ENCODE measurements at regions of chr5 and their contacts with region 1.

Region 1: DNA sequence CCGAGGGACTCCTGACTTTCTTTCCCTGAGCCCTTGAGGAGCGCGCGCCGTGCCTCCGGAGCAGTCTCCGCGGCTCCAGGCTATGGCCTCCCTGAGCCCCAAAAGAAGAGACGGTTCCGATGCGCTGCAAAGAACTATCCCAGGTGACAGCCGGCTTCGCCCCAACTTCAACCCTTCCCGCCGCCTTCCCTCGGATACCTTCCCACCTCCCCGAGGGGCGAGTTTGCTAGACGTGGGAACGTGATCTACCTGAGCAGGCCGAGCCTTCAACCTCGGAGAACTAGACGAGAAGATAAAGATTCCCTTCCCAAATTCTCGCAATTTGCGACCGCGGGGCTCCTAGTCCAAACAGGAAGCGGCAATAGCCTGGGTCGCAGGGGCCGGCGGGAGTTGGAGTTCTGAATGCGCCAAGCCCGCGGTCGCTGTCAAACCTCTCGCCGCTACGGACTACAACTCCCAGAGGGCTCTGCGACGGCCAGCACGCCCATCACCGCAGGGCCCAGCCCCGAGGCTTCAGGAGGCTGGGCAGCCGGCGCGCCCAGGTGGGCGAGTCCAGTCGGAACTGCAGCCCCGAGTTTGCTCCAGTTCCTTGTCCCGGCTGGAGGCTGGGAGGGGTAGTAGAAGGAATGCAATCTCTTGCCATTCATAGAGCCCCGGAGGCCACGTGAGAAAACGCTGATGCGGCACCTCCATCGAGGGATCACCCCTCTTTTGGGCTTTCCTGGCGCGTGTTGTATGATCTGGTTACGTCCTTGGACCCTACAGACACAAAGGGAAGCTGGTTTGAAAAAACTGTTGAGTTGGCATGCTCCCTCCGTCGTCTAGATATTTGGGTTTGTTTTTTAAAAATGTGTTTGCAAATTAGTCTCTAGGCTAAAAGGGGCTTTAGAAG is at the start of gene SLC38A9:
- DNase-seq: peak; percentile 98
- ATAC-seq: peak; percentile 100
- total RNA-seq, gene SLC38A9: 7.9 TPM

Region 2: GRCh38 chr5:56195016-56195415 is 482.8 kb after region 1 on chr5:
- intact Hi-C with region 1: loop called (anchors 5 kb)
- DNase-seq: no peak
- ATAC-seq: no peak

Measured in Right ventricle myocardium inferior (tissue), 1 donor.